Heart left ventricle (tissue), 16 donors: ENCODE measurements at regions of chr16 and their contacts with region 1.

Region 1: DNA sequence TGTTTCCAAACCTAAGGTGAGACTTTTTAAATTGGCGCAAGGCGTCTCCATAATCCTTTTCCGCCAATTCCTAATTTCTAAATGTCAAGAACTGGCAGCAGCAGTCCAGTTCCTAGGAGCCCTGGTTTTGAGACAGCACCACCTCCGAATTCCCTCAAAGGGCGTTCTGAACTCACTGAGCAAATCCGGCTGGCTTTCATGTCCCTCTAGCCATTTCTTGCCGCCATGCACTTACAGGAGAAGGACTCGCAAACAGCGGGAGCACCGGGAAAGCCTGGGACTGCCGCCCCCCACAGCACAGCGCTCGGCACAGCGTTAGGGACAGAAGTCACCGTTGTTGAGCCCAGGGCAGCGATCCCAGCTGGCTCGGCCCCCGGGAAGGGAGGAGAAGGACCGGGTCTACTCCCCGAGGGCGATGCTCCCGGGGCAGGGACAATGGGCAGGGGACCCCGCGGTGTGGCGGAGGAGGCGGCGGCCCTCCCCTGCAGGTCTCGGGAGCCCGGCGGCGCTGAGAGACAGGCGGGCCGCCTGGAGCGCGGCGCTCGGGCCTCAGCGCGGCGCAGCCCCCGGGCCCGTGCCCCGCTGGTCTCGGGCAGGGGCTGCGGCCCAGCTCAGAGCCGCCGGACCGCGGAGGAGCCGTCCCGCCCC is 545 bp downstream of the ARHGAP17 start:
- DNase-seq: peak; percentile 52 to 77 (median 60)
- ATAC-seq: peak; percentile 8 to 59 (median 48)
- H3K4me3 ChIP-seq: peak overlapping the region; percentile 71 to 97 (median 84)
- H3K27ac ChIP-seq: peak overlapping the region; percentile 92 to 99 (median 96)
- H3K4me1 ChIP-seq: peaks cover 15 to 76% (median 45%) of the 10 kb centered on the region in 12 donors
- H3K27me3 ChIP-seq: no peaks in the 10 kb centered on the region
- CTCF ChIP-seq: peak in 2 of 12 donors; percentile 16 to 23
- POLR2A ChIP-seq: no peak

Region 2: DNA sequence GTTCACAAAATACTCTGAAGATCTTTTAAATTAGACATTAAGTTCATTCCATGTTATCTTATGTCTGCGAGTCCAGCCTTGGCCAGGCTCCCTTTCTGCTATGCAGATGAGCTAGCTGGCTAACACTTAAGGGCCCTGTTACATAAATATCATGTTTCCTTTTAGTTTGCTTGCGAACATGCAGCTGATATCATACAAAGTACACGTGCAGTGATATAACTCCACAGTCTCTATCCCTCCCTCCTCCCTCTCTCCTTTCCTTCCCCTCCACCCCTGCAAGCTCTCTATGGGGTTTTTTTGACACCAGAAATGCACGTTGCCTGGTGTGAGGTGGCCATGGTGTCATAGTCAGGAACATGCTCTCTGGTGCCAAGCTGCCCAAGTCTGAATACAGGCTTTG is 45.6 kb before region 1 on chr16:
- intact Hi-C with region 1: loop called in 4 of 10 experiments (anchors 5 to 10 kb)
- DNase-seq: no peak
- ATAC-seq: peak; percentile 22 to 63 (median 47)
- H3K4me3 ChIP-seq: no peak overlapping the region
- H3K27ac ChIP-seq: peak overlapping the region in 7 of 12 donors; percentile 19 to 65 (median 32)
- H3K4me1 ChIP-seq: peaks cover 0 to 51% (median 20%) of the 10 kb centered on the region in 12 donors
- H3K27me3 ChIP-seq: no peaks in the 10 kb centered on the region
- CTCF ChIP-seq: no peak
- POLR2A ChIP-seq: no peak

Region 3: GRCh38 chr16:24983561-24983960 is 31.1 kb before region 1 on chr16:
- intact Hi-C with region 1: loop called in 6 of 10 experiments (anchors 2 to 5 kb)
- DNase-seq: peak in 1 of 5 donors; percentile 15
- ATAC-seq: peak in 1 of 4 donors; percentile 14
- H3K4me3 ChIP-seq: no peak overlapping the region
- H3K27ac ChIP-seq: peak overlapping the region; percentile 51 to 90 (median 84)
- H3K4me1 ChIP-seq: peaks cover 23 to 97% (median 86%) of the 10 kb centered on the region in 12 donors
- H3K27me3 ChIP-seq: no peaks in the 10 kb centered on the region
- CTCF ChIP-seq: no peak
- POLR2A ChIP-seq: no peak

Region 4: GRCh38 chr16:25045696-25046381 is 31.2 kb after region 1 on chr16:
- intact Hi-C with region 1: loop called in 2 of 10 experiments (anchors 2 to 5 kb)
- DNase-seq: no peak
- ATAC-seq: no peak
- H3K4me3 ChIP-seq: no peak overlapping the region
- H3K27ac ChIP-seq: no peak overlapping the region
- H3K4me1 ChIP-seq: peaks cover 3 to 29% (median 12%) of the 10 kb centered on the region in 12 donors
- H3K27me3 ChIP-seq: no peaks in the 10 kb centered on the region
- CTCF ChIP-seq: no peak
- POLR2A ChIP-seq: no peak

Region 5: DNA sequence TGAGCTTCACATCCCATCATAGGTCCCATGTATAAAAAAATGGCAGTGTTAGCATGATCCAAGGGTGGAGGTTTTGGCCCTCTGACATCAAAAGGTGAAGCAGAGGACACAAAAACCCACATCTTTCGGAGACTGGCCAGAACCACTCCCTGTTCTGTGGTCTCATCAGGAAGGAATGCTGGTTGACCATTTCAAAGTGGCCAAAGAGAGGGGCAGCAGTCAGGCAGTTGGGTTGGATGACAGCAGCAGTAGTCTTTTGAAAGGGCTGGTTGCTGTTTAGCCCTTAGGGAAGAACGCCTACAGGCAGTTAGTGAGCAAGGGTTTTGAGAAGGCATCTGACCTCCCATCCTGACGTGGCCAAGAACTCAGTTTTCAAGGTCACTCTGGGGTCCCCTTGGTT is 137.4 kb after region 1 on chr16:
- intact Hi-C with region 1: no loop called
- DNase-seq: no peak
- ATAC-seq: no peak
- H3K4me3 ChIP-seq: no peak overlapping the region
- H3K27ac ChIP-seq: no peak overlapping the region
- H3K4me1 ChIP-seq: no peaks in the 10 kb centered on the region
- H3K27me3 ChIP-seq: no peaks in the 10 kb centered on the region
- CTCF ChIP-seq: no peak
- POLR2A ChIP-seq: no peak